ENCODE measurements at regions of chr6 and their contacts with region 1.

Region 1: DNA sequence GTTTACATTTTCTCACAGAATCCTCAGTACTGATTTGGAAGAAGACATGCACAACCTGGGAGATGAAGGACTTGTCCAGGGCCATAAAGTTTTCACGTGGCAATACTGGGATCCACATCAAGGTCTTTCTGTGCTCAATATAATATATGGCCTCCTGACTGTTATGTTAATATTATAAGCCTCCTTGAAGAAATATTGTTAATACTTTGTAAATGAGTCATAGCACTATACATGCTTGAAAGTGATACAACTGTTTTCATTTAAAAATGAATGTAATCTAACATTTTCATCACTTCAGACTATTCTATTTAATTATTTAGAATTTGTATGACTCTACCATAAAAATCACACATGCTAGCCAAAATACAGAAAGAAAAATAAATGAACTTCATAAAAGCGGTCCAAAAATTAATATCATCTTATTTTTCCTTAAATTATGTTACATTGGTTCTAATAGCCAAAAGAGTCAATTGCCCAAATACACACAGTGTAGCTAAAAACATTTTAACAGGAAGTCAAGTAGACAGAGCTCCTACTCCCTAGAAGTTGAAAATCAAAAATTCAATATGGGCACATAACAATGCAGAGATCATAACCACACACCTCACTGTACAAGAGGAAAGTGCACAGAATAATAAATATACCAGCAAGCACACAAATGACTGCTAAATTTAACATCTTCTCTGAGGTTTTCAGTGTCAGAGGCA is 188.0 kb upstream of the HDDC2 start:
- DNase-seq: no peak

Region 2: GRCh38 chr6:125446011-125446410 is 43.7 kb before region 1 on chr6:
- intact Hi-C with region 1: loop called in 1 of 2 experiments (anchors 1 kb)
- DNase-seq: no peak